ENCODE measurements at regions of chr15 and their contacts with region 1.

Region 1: GRCh38 chr15:31391687-31392671 is 65.3 kb downstream of the KLF13 start:
- DNase-seq: peak; percentile 87
- ATAC-seq: peak; percentile 87
- H3K4me3 Mint-ChIP-seq: peak overlapping the region; percentile 83
- H3K27ac Mint-ChIP-seq: peak overlapping the region; percentile 89
- H3K4me1 Mint-ChIP-seq: peaks cover 58% of the 10 kb centered on the region
- H3K27me3 Mint-ChIP-seq: no peaks in the 10 kb centered on the region

Region 2: DNA sequence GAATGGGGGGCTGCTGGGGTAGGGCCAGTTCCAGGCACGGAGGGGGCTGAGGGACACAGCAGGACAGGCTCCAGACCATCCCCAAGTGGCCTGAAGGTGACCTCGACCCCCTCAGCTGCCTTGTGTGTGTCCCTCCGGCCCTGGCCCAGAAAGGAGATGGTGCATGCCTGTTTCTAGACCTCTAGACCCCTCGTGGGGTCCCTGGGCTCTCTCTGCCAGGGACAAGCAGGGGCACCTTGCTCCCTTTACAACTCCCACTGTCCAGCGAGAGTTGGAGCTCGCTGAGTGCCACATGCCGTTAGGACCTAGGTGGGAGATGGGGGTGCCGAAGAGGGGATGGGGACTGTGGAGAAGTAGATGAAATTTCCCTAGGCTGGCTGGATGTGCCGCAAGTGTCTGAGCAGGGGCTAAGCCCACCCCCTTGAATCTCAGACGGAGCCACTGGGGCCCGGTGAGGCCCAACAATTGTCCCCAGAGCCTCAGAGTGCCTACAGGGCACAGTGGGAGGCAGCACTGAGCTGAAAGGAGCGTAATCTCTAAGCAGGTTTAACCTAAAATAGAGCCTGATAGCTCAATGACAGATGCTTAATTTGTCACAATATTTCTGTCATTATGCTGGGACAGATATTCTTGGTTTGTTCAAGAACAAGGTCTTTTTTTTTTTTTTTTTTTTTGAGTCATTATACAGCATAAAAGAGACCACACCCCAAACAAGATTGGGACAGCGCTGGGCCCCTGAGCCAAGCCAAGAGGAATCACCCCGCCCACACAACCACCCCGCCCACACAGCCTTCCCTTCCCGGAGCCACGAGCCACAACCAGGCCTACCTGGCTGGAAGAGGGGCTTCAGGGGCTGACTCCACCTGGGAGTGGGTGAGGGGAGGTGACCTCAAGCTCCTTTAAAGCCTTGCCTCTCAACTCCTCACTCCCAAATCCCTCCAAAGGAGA is 88.9 kb before region 1 on chr15:
- CTCF ChIA-PET with region 1: no interaction called
- POLR2A ChIA-PET with region 1: no interaction called
- DNase-seq: peak; percentile 21
- ATAC-seq: peak; percentile 50
- H3K4me3 Mint-ChIP-seq: no peak overlapping the region
- H3K27ac Mint-ChIP-seq: peak overlapping the region; percentile 18
- H3K4me1 Mint-ChIP-seq: peaks cover 27% of the 10 kb centered on the region
- H3K27me3 Mint-ChIP-seq: peaks cover 6% of the 10 kb centered on the region

Region 3: DNA sequence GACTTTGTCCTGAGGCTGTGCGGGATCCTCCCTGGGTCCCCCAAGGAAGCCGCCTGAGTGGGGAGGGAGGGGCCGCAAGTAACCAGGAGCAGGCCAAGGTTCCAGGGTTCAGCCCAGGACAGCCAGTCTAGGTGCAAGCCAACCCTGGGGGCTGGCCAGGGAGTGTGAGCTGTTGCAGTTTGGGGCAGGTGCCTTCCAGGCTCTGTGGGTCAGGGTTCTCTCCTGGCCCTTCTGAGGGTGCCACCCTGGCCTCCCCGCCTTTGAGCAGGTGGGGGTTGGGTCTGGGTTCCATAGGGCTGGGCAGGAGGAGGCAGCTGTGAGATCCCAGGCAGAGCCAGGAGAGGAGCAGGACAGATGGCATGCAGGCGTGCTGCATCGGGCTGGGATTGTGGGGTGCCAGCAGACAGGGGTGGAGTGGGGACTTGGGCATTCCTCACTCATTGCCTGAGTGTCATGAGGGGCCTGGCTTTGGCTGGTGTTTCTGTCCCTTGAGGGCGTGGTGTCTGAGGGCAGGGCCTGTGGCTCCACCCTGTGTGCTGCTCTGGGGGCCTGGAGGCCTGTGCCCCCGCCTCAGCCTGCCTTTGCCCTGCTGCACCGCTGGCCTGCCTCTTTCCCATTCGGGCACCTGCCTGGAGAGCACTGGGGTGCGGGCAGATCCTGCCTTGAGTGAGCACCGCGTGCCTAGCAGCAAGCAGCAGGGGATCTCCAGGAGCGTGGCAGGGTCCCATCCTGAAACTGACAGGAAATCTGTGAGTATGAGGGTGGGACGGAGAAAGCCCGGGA is 47.0 kb before region 1 on chr15:
- CTCF ChIA-PET with region 1: interaction called, 3 read pairs
- POLR2A ChIA-PET with region 1: interaction called, 15 read pairs
- DNase-seq: peak; percentile 61
- ATAC-seq: peak; percentile 21
- H3K4me3 Mint-ChIP-seq: peak overlapping the region; percentile 95
- H3K27ac Mint-ChIP-seq: peak overlapping the region; percentile 97
- H3K4me1 Mint-ChIP-seq: peaks cover 98% of the 10 kb centered on the region
- H3K27me3 Mint-ChIP-seq: no peaks in the 10 kb centered on the region

Region 4: GRCh38 chr15:31472636-31473384 is 80.8 kb after region 1 on chr15:
- CTCF ChIA-PET with region 1: interaction called, 9 read pairs
- POLR2A ChIA-PET with region 1: interaction called, 11 read pairs
- DNase-seq: peak; percentile 77
- ATAC-seq: peak; percentile 96
- H3K4me3 Mint-ChIP-seq: peak overlapping the region; percentile 62
- H3K27ac Mint-ChIP-seq: peak overlapping the region; percentile 89
- H3K4me1 Mint-ChIP-seq: peaks cover 38% of the 10 kb centered on the region
- H3K27me3 Mint-ChIP-seq: no peaks in the 10 kb centered on the region